ENCODE measurements at regions of chr9 and their contacts with region 1.

Region 1: DNA sequence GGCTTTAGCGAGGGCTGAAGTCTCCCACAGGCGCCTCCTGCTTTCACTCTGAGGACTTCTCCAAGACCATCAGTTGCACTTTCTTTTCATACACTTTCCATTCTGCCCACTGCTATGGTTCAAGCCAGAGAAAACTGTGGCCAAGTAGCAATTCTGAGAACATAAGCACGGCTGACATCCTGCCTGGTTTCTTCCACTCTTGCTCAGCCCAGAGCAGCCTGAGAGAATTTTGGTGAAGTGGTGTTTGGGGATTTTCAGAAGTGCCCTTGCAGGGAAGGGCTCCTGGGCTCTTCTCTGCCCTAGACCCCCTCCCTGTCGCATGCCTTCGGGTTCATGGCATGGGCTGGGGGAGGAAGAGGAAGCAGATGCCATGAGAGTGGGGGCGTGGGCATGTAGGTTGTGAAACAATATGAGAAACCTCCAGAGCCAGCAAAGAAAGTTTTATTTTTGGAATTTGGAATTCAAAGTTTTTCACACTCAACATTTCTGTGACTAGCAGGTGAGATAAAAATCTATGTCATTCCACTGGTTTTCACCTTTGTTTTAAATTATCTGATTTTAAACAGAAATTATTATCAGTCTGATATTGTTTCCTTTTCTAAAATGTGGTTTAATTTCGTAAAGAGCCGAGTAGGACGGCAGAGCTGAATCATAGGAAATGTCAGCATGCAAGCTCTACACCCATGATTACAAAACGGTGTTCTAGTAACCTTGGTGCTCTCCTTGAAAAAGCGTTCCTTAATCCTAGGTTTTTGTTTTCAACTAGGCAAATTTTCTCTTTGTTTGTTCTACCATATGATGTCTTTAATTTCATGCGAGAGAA is 27.8 kb upstream of the TNFSF8 start:
- DNase-seq: peak; percentile 85
- H3K4me3 Mint-ChIP-seq: peak overlapping the region; percentile 72
- H3K27ac Mint-ChIP-seq: peak overlapping the region; percentile 98
- H3K4me1 Mint-ChIP-seq: peaks cover 59% of the 10 kb centered on the region
- H3K27me3 Mint-ChIP-seq: no peaks in the 10 kb centered on the region

Region 2: DNA sequence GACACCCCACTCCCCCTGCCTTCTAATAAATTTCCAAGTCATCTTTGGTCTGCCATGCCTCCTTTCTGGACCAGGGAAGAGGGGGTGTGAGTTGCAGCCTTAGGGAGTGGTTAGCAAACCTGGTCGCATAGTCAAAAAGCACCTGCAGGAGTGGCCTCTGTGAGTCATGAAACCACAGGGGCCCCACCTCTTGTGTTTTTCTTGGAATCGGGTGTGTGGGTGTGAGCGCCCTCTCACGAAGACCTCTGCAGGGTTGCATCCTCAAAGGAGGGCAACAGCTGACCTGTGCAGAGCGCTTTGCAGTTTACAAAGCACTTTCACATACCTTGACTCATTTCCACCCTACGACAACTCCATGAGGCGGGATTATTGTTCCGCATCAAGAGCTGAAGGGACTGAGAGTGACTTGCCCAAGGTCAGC is 239.4 kb before region 1 on chr9:
- intact Hi-C with region 1: loop called (anchors 1 kb)
- DNase-seq: peak; percentile 98
- H3K4me3 Mint-ChIP-seq: peak overlapping the region; percentile 74
- H3K27ac Mint-ChIP-seq: peak overlapping the region; percentile 97
- H3K4me1 Mint-ChIP-seq: peaks cover 81% of the 10 kb centered on the region
- H3K27me3 Mint-ChIP-seq: no peaks in the 10 kb centered on the region

Region 3: DNA sequence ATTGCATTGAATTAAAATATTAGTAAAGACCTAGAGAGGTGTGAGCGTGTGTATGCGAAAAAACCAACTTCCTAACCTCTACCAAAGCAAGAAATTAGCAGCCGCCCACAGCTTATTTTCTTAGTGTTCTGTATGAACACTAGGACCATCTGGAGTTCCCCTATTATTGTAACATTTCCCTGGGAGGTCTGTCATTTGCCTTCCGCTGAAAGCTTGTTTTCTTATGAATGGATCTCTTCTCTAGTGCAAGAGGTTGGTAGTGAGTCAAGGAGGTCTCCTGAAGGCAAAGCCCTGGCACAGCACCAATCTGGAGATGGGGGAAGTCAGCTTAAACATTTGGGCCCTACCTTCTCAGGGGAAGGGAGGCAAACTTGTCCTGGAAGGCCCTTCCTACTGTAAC is 38.6 kb before region 1 on chr9:
- intact Hi-C with region 1: loop called (anchors 5 kb)
- DNase-seq: peak; percentile 56
- H3K4me3 Mint-ChIP-seq: peak overlapping the region; percentile 59
- H3K27ac Mint-ChIP-seq: peak overlapping the region; percentile 78
- H3K4me1 Mint-ChIP-seq: peaks cover 89% of the 10 kb centered on the region
- H3K27me3 Mint-ChIP-seq: no peaks in the 10 kb centered on the region

Region 4: GRCh38 chr9:114968671-114969070 is 10.4 kb after region 1 on chr9:
- intact Hi-C with region 1: loop called (anchors 1 kb)
- DNase-seq: no peak
- H3K4me3 Mint-ChIP-seq: no peak overlapping the region
- H3K27ac Mint-ChIP-seq: peak overlapping the region; percentile 62
- H3K4me1 Mint-ChIP-seq: peaks cover 20% of the 10 kb centered on the region
- H3K27me3 Mint-ChIP-seq: no peaks in the 10 kb centered on the region

Region 5: DNA sequence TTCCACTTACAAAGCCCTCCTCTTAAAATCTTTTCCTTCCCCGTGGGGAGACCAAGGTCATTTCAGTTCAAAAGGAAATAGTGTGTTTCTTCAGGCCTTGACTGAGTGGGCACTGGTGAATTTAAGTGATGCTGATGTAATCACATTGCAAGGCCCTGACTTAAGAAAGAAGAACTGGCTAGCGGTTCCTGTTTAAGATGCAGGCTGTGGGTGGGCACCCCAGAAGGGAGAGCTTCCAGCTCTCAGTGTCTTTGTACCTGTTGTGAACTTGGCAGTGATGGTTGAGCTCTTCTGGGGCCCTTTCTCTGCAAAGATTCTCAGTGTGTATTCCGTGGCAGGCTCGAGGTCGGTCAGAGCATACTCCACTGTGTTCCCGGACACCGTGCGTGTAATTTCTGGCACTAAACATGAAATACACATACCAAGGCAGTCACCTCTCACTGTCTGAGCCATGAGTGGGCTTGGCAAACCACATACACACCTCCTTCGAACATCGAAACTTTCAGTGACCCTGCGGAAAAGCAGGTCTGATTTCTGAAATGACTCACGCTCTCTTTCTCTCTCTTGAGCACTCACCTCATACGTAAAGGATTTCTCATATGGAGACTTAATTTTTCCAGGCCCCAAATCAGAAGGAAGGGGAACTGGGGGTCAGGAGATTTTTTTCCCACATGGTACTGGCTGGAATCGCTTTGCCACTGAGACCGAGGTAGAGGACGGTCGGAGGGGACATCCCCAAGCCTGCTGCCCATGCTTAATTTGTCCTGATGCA is 77.8 kb after region 1 on chr9:
- intact Hi-C with region 1: loop called (anchors 2 kb)
- DNase-seq: peak; percentile 67
- H3K4me3 Mint-ChIP-seq: peak overlapping the region; percentile 60
- H3K27ac Mint-ChIP-seq: peak overlapping the region; percentile 88
- H3K4me1 Mint-ChIP-seq: peaks cover 23% of the 10 kb centered on the region
- H3K27me3 Mint-ChIP-seq: peaks cover 2% of the 10 kb centered on the region

Region 6: DNA sequence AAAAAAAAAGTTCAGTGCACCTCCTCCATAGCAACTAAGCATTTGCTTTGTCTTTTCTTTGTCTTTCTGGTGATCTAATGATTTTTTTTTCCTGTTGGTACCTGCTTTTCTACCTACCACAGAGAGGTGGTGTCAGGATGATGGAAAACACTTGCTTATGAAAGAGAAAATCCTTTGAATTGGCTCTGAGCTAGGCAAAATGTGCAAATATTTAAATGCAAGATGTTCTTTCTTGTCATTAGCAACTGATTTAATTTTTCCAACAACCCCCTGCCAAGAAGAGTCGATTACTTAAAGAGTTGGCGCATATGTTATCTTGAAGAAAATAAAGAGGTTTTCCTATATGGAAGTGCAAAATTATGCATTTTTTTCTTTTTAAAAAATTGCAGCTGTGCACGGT is 122.0 kb after region 1 on chr9:
- intact Hi-C with region 1: no loop called
- DNase-seq: no peak
- H3K4me3 Mint-ChIP-seq: no peak overlapping the region
- H3K27ac Mint-ChIP-seq: no peak overlapping the region
- H3K4me1 Mint-ChIP-seq: no peaks in the 10 kb centered on the region
- H3K27me3 Mint-ChIP-seq: peaks cover 12% of the 10 kb centered on the region

Measured in activated CD4-positive, alpha-beta T cell treated with anti-CD3 and anti-CD28 coated beads, Interleukin-2, amount 10 ng/mL, durations not matched to agents 24 days and 14 days (primary cell).